Lower leg skin (tissue), 4 donors: ENCODE measurements at regions of chr5 and their contacts with region 1.

Region 1: DNA sequence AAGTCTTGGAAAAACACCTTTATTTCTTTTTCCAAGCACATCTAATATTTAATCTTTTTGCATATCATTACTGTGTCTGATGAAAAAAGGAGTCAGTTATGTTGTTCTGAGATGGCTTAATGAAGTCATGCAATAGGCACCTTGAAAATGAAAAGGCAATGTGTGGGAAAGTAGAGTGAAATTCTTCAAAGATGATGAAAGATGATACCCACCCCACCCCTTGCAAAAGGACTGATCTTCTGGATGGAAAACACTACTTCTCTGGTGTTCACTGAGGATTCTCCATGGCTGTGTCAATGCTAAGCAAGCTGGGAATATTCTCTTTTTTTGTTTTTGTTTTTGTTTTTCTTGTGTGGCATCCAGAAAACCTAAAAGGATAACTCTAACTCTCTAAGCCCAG is 47.9 kb upstream of the TRPC7 start:
- DNase-seq: no peak
- H3K4me3 ChIP-seq: no peak overlapping the region
- CTCF ChIP-seq: no peak
- POLR2A ChIP-seq: no peak

Region 2: GRCh38 chr5:136222583-136223274 is 190.5 kb before region 1 on chr5:
- intact Hi-C with region 1: no loop called
- DNase-seq: no peak
- H3K4me3 ChIP-seq: no peak overlapping the region
- CTCF ChIP-seq: no peak
- POLR2A ChIP-seq: no peak

Region 3: GRCh38 chr5:136364307-136364706 is 48.9 kb before region 1 on chr5:
- intact Hi-C with region 1: loop called (anchors 2 kb)
- DNase-seq: no peak
- H3K4me3 ChIP-seq: no peak overlapping the region
- CTCF ChIP-seq: no peak
- POLR2A ChIP-seq: no peak

Region 4: GRCh38 chr5:136522217-136522956 is 109.2 kb after region 1 on chr5:
- intact Hi-C with region 1: no loop called
- DNase-seq: no peak
- H3K4me3 ChIP-seq: no peak overlapping the region
- CTCF ChIP-seq: no peak
- POLR2A ChIP-seq: no peak

Region 5: DNA sequence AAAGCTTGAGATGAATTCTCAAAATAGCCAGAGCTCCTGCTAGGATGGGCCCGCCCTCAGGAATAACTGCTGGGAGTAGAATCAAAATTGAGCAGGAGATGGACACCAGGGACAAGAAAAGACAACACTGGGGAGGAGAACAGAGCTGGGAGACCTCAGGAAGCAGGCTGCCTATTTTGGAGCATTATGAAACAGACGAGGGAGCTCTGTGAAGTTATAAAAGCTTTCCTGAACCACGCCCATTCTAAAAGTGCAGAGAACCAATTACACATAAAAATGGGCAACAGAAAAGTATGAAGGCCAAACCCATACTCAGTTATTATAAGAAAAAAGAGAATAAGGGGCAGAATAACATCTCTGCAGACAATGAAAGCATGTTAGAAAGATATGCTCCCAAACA is 166.0 kb after region 1 on chr5:
- intact Hi-C with region 1: no loop called
- DNase-seq: no peak
- H3K4me3 ChIP-seq: no peak overlapping the region
- CTCF ChIP-seq: no peak
- POLR2A ChIP-seq: no peak